Activated T-helper 2 cell treated with anti-CD3 and anti-CD28 coated beads, Interferon-gamma antibody, Interleukin-2, Interleukin-4, amounts not matched to agents 10 μg/mL and 5 μg/mL and 100 μg/mL, durations not matched to agents 14 hours and 24 hours and 36 hours (primary cell): ENCODE measurements at regions of chr13 and their contacts with region 1.

Region 1: GRCh38 chr13:43041369-43041921 is 18.1 kb downstream of the DNAJC15 start:
- DNase-seq: no peak
- H3K4me3 Mint-ChIP-seq: no peak overlapping the region
- H3K27ac Mint-ChIP-seq: no peak overlapping the region
- H3K4me1 Mint-ChIP-seq: peaks cover 40% of the 10 kb centered on the region
- H3K27me3 Mint-ChIP-seq: no peaks in the 10 kb centered on the region

Region 2: DNA sequence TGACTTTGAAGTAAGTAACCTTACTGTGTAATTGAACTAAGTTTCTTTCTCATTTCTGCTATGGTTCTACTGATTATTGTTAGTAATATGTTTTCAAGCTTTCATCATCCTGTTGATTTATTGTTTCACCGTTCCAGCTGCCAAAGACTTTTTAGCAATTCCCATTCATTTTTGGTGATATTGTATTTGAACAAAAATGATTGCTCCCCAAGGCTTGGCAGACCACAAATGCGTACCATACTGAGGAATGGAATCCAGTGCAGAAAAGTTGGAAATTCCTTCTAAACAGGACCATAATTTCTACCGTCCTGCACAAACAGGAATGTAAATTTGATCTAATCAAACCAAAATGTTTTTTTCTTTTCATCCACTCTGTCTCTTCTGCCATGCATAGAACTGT is 60.1 kb before region 1 on chr13:
- intact Hi-C with region 1: no loop called
- DNase-seq: no peak
- H3K4me3 Mint-ChIP-seq: no peak overlapping the region
- H3K27ac Mint-ChIP-seq: no peak overlapping the region
- H3K4me1 Mint-ChIP-seq: peaks cover 26% of the 10 kb centered on the region
- H3K27me3 Mint-ChIP-seq: no peaks in the 10 kb centered on the region

Region 3: GRCh38 chr13:43054803-43055802 is 13.7 kb after region 1 on chr13:
- intact Hi-C with region 1: loop called (anchors 1 kb)
- DNase-seq: no peak
- H3K4me3 Mint-ChIP-seq: no peak overlapping the region
- H3K27ac Mint-ChIP-seq: no peak overlapping the region
- H3K4me1 Mint-ChIP-seq: peaks cover 35% of the 10 kb centered on the region
- H3K27me3 Mint-ChIP-seq: no peaks in the 10 kb centered on the region

Region 4: GRCh38 chr13:43094901-43095300 is 53.5 kb after region 1 on chr13:
- intact Hi-C with region 1: loop called (anchors 5 kb)
- DNase-seq: no peak
- H3K4me3 Mint-ChIP-seq: no peak overlapping the region
- H3K27ac Mint-ChIP-seq: peak overlapping the region; percentile 48
- H3K4me1 Mint-ChIP-seq: peaks cover 11% of the 10 kb centered on the region
- H3K27me3 Mint-ChIP-seq: no peaks in the 10 kb centered on the region

Region 5: DNA sequence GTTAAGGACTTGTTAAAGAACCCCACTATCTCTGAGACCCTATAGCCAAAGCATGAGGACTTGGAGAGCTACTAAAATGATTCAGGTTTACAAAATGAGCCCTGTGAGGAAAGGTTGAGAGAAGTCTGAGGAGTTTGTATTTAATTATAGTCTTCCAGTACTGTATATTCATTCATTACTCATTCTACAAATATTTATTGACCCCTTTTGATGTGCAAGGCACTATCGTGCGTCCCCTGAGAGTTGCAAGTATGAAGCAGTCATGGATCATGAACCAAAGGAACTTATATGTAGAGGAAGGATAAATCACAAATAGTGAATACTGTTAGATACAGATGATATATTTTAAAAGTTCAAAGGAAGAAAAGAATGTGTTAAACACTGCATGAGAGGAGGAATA is 66.3 kb after region 1 on chr13:
- intact Hi-C with region 1: no loop called
- DNase-seq: no peak
- H3K4me3 Mint-ChIP-seq: no peak overlapping the region
- H3K27ac Mint-ChIP-seq: no peak overlapping the region
- H3K4me1 Mint-ChIP-seq: peaks cover 2% of the 10 kb centered on the region
- H3K27me3 Mint-ChIP-seq: peaks cover 3% of the 10 kb centered on the region